K562 (cell line): ENCODE measurements at regions of chr19 and their contacts with region 1.

Region 1: GRCh38 chr19:47243776-47244547 is 12.4 kb upstream of the CCDC9 start:
- DNase-seq: peak; percentile 87 to 98 (median 90)
- ATAC-seq: peak; percentile 83
- H3K4me3 ChIP-seq: peak overlapping the region; percentile 44
- H3K27ac ChIP-seq: peak overlapping the region; percentile 97
- H3K4me1 ChIP-seq: peaks cover 35 to 50% of the 10 kb centered on the region in 2 experiments
- H3K27me3 ChIP-seq: no peaks in the 10 kb centered on the region
- CTCF ChIP-seq: peak; percentile 98 to 99 (median 98)
- EP300 ChIP-seq: peak; percentile 100
- POLR2A ChIP-seq: peak; percentile 72
- RAD21 ChIP-seq: peak; percentile 97 to 99

Region 2: GRCh38 chr19:46850228-46851203 is 393.4 kb before region 1 on chr19 and contains the start of gene AP2S1:
- CTCF ChIA-PET with region 1: no interaction called
- POLR2A ChIA-PET with region 1: interaction called, 4 read pairs
- in situ Hi-C with region 1: loop called (anchors 10 kb)
- intact Hi-C with region 1: no loop called
- DNase-seq: peak; percentile 87 to 97 (median 91)
- ATAC-seq: peak; percentile 95
- H3K4me3 ChIP-seq: peak within 1 kb of the TSS; percentile 92
- H3K27ac ChIP-seq: peak within 1 kb of the TSS; percentile 88
- H3K4me1 ChIP-seq: peaks cover 14 to 29% of the 10 kb centered on the region in 2 experiments
- H3K27me3 ChIP-seq: no peaks in the 10 kb centered on the region
- CTCF ChIP-seq: no peak; a peak in 1 of 6 replicates
- EP300 ChIP-seq: no peak
- POLR2A ChIP-seq: peak; percentile 82
- RAD21 ChIP-seq: no peak
- polyA plus RNA-seq, gene AP2S1: 32.4 to 72.0 TPM

Region 3: GRCh38 chr19:47013041-47013517 is 230.9 kb before region 1 on chr19:
- CTCF ChIA-PET with region 1: no interaction called
- POLR2A ChIA-PET with region 1: no interaction called
- in situ Hi-C with region 1: no loop called
- intact Hi-C with region 1: loop called (anchors 5 kb)
- DNase-seq: peak; percentile 81 to 87 (median 83)
- ATAC-seq: peak; percentile 98
- H3K4me3 ChIP-seq: no peak overlapping the region
- H3K27ac ChIP-seq: no peak overlapping the region
- H3K4me1 ChIP-seq: peaks cover 3 to 9% of the 10 kb centered on the region in 2 experiments; a peak in 3 of 5 replicates
- H3K27me3 ChIP-seq: no peaks in the 10 kb centered on the region
- CTCF ChIP-seq: peak; percentile 94 to 98 (median 97)
- EP300 ChIP-seq: no peak
- POLR2A ChIP-seq: no peak
- RAD21 ChIP-seq: peak; percentile 91 to 96

Region 4: GRCh38 chr19:47130591-47131227 is 113.3 kb before region 1 on chr19 and contains the start of gene SAE1:
- CTCF ChIA-PET with region 1: interaction called, 3 read pairs
- POLR2A ChIA-PET with region 1: interaction called, 12 read pairs
- in situ Hi-C with region 1: no loop called
- intact Hi-C with region 1: loop called (anchors 2 kb)
- DNase-seq: peak; percentile 96 to 99 (median 98)
- ATAC-seq: peak; percentile 90
- H3K4me3 ChIP-seq: peak within 1 kb of the TSS; percentile 68
- H3K27ac ChIP-seq: peak within 1 kb of the TSS; percentile 92
- H3K4me1 ChIP-seq: peaks cover 20 to 31% of the 10 kb centered on the region in 2 experiments; a peak in 4 of 5 replicates
- H3K27me3 ChIP-seq: no peaks in the 10 kb centered on the region
- CTCF ChIP-seq: peak; percentile 67 to 70 (median 69)
- EP300 ChIP-seq: peak; percentile 32; the same call in 1 of the 2 replicates
- POLR2A ChIP-seq: peak; percentile 94
- RAD21 ChIP-seq: peak; percentile 27 to 44
- polyA plus RNA-seq, gene SAE1: 82.8 to 133 TPM

Region 5: GRCh38 chr19:47210689-47211316 is 33.2 kb before region 1 on chr19:
- CTCF ChIA-PET with region 1: interaction called, 20 read pairs
- POLR2A ChIA-PET with region 1: interaction called, 34 read pairs
- in situ Hi-C with region 1: no loop called
- intact Hi-C with region 1: loop called (anchors 1 kb)
- DNase-seq: peak; percentile 66 to 90 (median 72)
- ATAC-seq: peak; percentile 77
- H3K4me3 ChIP-seq: no peak overlapping the region
- H3K27ac ChIP-seq: peak overlapping the region; percentile 77
- H3K4me1 ChIP-seq: peaks cover 12 to 13% of the 10 kb centered on the region in 2 experiments; a peak in 4 of 5 replicates
- H3K27me3 ChIP-seq: no peaks in the 10 kb centered on the region
- CTCF ChIP-seq: peak; percentile 83 to 92 (median 85)
- EP300 ChIP-seq: peak; percentile 65
- POLR2A ChIP-seq: no peak
- RAD21 ChIP-seq: peak; percentile 80 to 82

Region 6: DNA sequence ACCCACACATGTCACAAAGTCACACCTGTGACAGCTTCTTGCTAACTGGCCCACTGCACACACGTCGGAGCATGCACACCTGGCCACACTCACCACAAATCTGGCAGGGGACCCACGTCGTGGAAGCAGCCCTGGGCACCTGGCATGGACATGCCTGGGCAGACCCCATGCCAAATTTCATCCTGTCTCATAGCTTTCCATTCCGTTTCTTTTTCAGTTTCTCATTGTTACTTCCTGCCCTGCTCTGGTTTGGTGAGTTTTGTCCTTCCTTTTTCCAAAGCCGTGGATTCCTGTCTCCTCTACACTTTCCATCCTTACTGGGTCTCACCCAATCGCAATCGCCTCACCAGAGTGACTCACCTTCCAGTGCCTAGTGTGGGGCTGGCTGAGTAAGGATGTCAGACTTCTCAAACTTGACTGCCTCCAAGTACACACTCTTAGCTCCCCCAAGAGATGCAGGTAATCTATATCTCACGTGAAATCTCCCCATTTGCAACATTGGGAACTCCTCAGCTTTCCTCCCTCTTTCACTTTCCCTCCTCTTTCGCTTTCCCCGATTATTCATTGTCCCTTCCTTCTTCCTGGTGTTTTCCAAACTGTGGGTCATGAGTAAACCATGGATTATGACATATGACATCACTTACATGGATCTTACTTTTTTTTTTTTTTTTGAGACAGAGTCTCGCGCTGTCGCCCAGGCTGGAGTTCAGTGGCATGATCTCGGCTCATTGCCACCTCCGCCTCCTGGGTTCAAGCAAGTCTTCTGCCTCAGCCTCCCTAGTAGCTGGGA is 11.3 kb before region 1 on chr19:
- CTCF ChIA-PET with region 1: interaction called, 3 read pairs
- POLR2A ChIA-PET with region 1: interaction called, 112 read pairs
- in situ Hi-C with region 1: no loop called
- intact Hi-C with region 1: loop called (anchors 1 kb)
- DNase-seq: peak in 1 of 4 experiments; percentile 6
- ATAC-seq: no peak
- H3K4me3 ChIP-seq: no peak overlapping the region
- H3K27ac ChIP-seq: no peak overlapping the region
- H3K4me1 ChIP-seq: peaks cover 20 to 54% of the 10 kb centered on the region in 2 experiments
- H3K27me3 ChIP-seq: no peaks in the 10 kb centered on the region; a peak in 1 of 5 replicates
- CTCF ChIP-seq: no peak
- EP300 ChIP-seq: no peak
- POLR2A ChIP-seq: no peak
- RAD21 ChIP-seq: no peak

Region 7: DNA sequence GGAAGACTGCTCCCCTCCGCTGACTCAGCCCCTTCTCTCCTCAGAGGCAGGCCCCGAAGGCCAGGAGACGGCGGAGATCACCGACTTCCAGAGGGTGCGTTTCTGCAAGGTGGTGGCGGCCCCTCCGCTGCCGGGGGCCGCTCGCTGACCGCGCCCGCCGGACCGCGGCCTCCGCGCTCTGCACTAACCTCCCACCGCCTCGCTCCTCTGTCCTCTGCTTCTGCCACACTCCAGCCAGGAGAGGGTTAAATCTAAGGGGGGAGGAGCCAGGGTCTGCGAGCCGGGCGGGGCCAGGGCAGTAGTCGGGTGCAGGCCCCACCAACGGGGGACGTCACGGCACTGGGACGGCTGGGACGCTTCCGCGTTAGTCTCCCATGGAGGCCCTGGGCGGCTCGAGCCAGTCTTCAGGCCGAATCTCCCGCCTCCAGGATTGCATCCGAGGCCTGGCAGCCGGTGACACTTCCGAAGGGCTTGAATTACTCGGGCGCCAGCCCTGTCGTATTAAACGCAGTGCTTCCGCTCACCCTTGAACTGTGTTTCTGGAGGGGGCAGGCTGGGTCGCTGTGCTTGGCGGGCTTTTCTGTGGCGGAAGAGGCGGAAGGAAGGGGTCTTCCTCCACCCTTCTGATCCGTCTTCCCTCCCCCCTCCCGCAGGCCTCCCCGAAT is 29.5 kb after region 1 on chr19:
- CTCF ChIA-PET with region 1: no interaction called
- POLR2A ChIA-PET with region 1: interaction called, 17 read pairs
- in situ Hi-C with region 1: no loop called
- intact Hi-C with region 1: no loop called
- DNase-seq: peak; percentile 85 to 97 (median 89)
- ATAC-seq: peak; percentile 85
- H3K4me3 ChIP-seq: peak overlapping the region; percentile 74
- H3K27ac ChIP-seq: peak overlapping the region; percentile 95
- H3K4me1 ChIP-seq: peaks cover 33 to 67% of the 10 kb centered on the region in 2 experiments
- H3K27me3 ChIP-seq: no peaks in the 10 kb centered on the region
- CTCF ChIP-seq: no peak
- EP300 ChIP-seq: no peak
- POLR2A ChIP-seq: peak; percentile 92
- RAD21 ChIP-seq: no peak

Region 8: GRCh38 chr19:47363758-47364531 is 120.0 kb after region 1 on chr19:
- CTCF ChIA-PET with region 1: no interaction called
- POLR2A ChIA-PET with region 1: no interaction called
- in situ Hi-C with region 1: no loop called
- intact Hi-C with region 1: no loop called
- DNase-seq: peak in 1 of 4 experiments; percentile 36
- ATAC-seq: peak; percentile 73; the same call in 2 of the 3 replicates
- H3K4me3 ChIP-seq: no peak overlapping the region
- H3K27ac ChIP-seq: no peak overlapping the region
- H3K4me1 ChIP-seq: peaks cover 0 to 4% of the 10 kb centered on the region in 2 experiments; a peak in 1 of 5 replicates
- H3K27me3 ChIP-seq: no peaks in the 10 kb centered on the region
- CTCF ChIP-seq: no peak
- EP300 ChIP-seq: no peak
- POLR2A ChIP-seq: no peak
- RAD21 ChIP-seq: no peak

Region 9: DNA sequence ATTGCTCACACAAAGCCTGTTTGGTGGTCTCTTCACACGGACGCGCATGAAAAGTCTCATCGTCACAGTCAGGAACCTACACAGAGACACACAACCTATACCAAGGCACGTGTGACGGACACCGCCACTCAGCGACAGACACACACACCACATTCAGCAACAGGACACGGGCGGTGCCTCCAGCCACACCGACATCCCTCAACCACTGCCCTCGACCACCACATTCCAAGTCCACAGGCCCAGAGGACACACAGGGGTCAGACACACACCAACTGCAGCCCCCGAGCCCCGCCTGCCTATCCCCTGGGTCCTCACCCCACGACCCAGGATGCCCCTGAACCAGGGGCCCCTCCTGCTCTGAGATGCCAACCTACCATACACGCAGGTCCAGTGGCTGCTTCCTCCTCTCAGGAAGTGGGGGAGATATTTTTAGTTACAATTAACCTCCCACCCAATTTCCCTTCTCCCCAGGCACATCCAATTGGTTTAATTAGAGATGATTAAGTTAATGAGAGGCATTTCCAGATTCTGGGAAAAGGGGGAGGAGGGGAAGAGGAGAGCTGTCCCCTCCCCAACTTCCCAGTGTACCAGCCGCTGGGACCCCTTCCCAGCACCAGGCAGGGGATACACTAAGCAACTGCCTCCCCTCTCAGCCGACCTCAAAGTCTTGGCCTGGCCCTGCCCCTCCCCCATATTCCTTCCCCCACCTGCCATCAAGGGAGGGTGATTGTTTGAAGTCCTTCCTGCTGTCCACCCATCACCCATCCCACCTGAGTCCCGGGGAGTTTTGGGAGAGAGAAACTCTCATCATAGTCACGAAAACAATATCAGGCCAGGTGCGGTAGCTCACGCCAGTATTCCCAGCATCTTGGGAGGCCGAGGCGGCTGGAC is 155.0 kb after region 1 on chr19:
- CTCF ChIA-PET with region 1: no interaction called
- POLR2A ChIA-PET with region 1: no interaction called
- in situ Hi-C with region 1: no loop called
- intact Hi-C with region 1: no loop called
- DNase-seq: no peak
- ATAC-seq: no peak
- H3K4me3 ChIP-seq: no peak overlapping the region
- H3K27ac ChIP-seq: no peak overlapping the region
- H3K4me1 ChIP-seq: peaks cover 0 to 4% of the 10 kb centered on the region in 2 experiments; a peak in 2 of 5 replicates
- H3K27me3 ChIP-seq: peaks cover 20 to 47% of the 10 kb centered on the region in 2 experiments; a peak in 4 of 5 replicates
- CTCF ChIP-seq: no peak
- EP300 ChIP-seq: no peak
- POLR2A ChIP-seq: no peak
- RAD21 ChIP-seq: no peak